GM12878 (cell line): ENCODE measurements at regions of chr13 and their contacts with region 1.

Region 1: DNA sequence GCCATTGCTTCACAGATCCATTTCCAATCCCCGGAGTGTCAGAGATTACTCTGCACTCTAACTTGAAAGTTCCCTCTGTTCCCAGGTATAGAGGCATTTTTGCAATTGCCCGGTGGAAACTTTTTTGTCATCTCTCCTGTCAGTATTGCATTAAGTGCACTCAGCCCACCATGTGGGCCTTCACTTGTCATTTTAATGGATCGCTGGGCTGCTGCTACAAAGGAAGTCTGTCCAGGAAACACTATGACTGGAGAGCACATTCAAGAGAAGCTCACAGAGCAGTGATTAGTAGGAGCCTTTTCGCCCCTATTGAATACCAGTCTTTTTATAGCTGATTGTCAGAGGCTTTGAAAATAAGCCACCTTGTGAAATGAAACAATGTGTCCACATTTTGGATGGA is 180.9 kb downstream of the B3GLCT start:
- DNase-seq: no peak
- ATAC-seq: no peak
- H3K4me3 ChIP-seq: no peak overlapping the region
- H3K27ac ChIP-seq: no peak overlapping the region
- H3K4me1 ChIP-seq: no peaks in the 10 kb centered on the region
- H3K27me3 ChIP-seq: no peaks in the 10 kb centered on the region
- CTCF ChIP-seq: no peak
- EP300 ChIP-seq: no peak
- POLR2A ChIP-seq: no peak
- RAD21 ChIP-seq: no peak

Region 2: DNA sequence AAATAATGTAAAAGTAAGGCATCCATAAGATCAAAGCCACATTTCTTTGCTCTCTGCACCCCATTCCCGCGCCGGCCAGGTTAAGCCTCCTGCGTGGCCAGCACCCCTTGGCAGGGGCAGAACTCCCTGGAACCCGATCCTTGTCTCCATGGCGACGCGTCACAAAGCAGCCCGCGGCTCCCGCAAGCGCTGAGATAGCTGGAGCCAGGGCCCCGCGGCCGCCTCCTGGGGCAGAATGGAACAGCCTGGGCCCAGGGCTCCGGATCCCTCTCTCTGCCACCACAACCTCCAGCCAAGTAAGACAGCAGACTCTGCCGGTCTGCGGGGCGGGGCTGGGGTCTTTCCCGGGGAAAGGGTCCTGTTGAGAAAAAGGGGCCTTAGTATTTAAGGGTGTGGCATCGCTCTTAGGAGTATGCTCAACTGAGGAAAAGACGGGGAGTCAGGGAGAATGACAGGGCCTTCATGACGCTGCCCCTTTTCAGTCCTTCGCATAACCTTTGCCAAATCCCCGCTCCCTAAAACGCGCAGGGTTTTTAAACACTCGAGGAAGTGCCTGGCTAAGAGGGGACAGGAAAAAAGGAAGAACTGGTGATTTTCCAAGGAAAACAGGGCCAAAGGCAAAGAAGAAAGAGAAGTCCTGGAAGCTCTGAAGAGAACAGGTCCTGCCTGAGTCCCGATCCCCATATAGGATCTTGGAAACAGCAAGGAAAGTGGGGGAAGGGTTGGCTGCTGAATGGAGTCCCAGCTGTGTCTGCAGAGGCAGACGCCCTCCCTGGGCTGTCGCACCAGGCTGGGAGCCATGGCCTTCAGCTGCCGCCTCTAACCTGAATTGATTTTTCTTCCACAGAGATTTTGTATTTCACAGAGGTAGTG is 448.0 kb before region 1 on chr13 and contains the start of gene TEX26:
- CTCF ChIA-PET with region 1: no interaction called
- POLR2A ChIA-PET with region 1: no interaction called
- RAD21 ChIA-PET with region 1: no interaction called
- SMC1A ChIA-PET with region 1: no interaction called
- in situ Hi-C with region 1: no loop called
- intact Hi-C with region 1: no loop called
- DNase-seq: no peak
- ATAC-seq: no peak
- H3K4me3 ChIP-seq: no peak within 1 kb of the TSS
- H3K27ac ChIP-seq: no peak within 1 kb of the TSS
- H3K4me1 ChIP-seq: no peaks in the 10 kb centered on the region
- H3K27me3 ChIP-seq: peaks cover 2 to 3% of the 10 kb centered on the region in 2 experiments; a peak in 1 of 4 replicates
- CTCF ChIP-seq: no peak
- EP300 ChIP-seq: no peak
- POLR2A ChIP-seq: no peak
- RAD21 ChIP-seq: no peak
- polyA plus RNA-seq, gene TEX26: not detected

Region 3: GRCh38 chr13:31349165-31349564 is 31.6 kb before region 1 on chr13:
- CTCF ChIA-PET with region 1: no interaction called
- POLR2A ChIA-PET with region 1: no interaction called
- RAD21 ChIA-PET with region 1: no interaction called
- SMC1A ChIA-PET with region 1: no interaction called
- in situ Hi-C with region 1: loop called (anchors 5 kb)
- intact Hi-C with region 1: no loop called
- DNase-seq: no peak
- ATAC-seq: no peak
- H3K4me3 ChIP-seq: no peak overlapping the region
- H3K27ac ChIP-seq: no peak overlapping the region
- H3K4me1 ChIP-seq: no peaks in the 10 kb centered on the region
- H3K27me3 ChIP-seq: no peaks in the 10 kb centered on the region; a peak in 1 of 4 replicates
- CTCF ChIP-seq: no peak
- EP300 ChIP-seq: no peak
- POLR2A ChIP-seq: no peak
- RAD21 ChIP-seq: no peak

Region 4: DNA sequence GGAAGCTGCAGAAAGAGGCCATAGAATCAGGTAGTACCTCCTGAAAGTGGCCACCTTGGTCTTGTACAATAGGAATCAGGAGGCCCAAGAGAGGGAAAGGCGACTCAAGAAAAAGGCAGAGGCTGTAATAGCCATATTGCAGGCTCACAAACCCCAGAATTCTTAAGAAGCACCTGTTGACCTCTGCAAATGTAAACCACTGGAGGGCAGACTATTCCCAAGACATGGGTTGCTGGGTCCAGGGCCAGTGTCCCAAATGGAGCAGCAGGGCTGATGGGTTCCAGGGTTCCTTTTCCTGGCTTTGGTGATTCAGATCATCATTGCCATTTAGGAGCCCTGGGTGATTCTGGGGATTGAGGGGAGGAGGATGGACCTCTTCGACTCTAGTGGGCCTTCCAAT is 13.3 kb before region 1 on chr13:
- CTCF ChIA-PET with region 1: no interaction called
- POLR2A ChIA-PET with region 1: no interaction called
- RAD21 ChIA-PET with region 1: no interaction called
- SMC1A ChIA-PET with region 1: no interaction called
- in situ Hi-C with region 1: no loop called
- intact Hi-C with region 1: no loop called
- DNase-seq: no peak
- ATAC-seq: no peak
- H3K4me3 ChIP-seq: no peak overlapping the region
- H3K27ac ChIP-seq: no peak overlapping the region
- H3K4me1 ChIP-seq: no peaks in the 10 kb centered on the region
- H3K27me3 ChIP-seq: no peaks in the 10 kb centered on the region
- CTCF ChIP-seq: no peak
- EP300 ChIP-seq: no peak
- POLR2A ChIP-seq: no peak
- RAD21 ChIP-seq: no peak